Dorsolateral prefrontal cortex (tissue), 120 donors: ENCODE measurements at regions of chr11 and their contacts with region 1.

Region 1: GRCh38 chr11:126607374-126607773 is 251.9 kb downstream of the ST3GAL4 start:
- DNase-seq: peak in 9 of 10 donors; percentile 63 to 83 (median 75)
- H3K4me3 ChIP-seq: peak overlapping the region in 2 of 59 donors; percentile 20 to 32
- H3K27ac ChIP-seq: peak overlapping the region in 19 of 59 donors; percentile 4 to 70 (median 21)
- H3K27me3 ChIP-seq: no peaks in the 10 kb centered on the region
- CTCF ChIP-seq: peak; percentile 26 to 92 (median 83)

Region 2: GRCh38 chr11:126585781-126586491 is 21.4 kb before region 1 on chr11:
- intact Hi-C with region 1: no loop called
- DNase-seq: peak in 3 of 10 donors; percentile 52 to 59 (median 55)
- H3K4me3 ChIP-seq: peak overlapping the region in 27 of 59 donors; percentile 1 to 40 (median 14)
- H3K27ac ChIP-seq: peak overlapping the region in 18 of 59 donors; percentile 1 to 51 (median 26)
- H3K27me3 ChIP-seq: no peaks in the 10 kb centered on the region
- CTCF ChIP-seq: no peak

Region 3: DNA sequence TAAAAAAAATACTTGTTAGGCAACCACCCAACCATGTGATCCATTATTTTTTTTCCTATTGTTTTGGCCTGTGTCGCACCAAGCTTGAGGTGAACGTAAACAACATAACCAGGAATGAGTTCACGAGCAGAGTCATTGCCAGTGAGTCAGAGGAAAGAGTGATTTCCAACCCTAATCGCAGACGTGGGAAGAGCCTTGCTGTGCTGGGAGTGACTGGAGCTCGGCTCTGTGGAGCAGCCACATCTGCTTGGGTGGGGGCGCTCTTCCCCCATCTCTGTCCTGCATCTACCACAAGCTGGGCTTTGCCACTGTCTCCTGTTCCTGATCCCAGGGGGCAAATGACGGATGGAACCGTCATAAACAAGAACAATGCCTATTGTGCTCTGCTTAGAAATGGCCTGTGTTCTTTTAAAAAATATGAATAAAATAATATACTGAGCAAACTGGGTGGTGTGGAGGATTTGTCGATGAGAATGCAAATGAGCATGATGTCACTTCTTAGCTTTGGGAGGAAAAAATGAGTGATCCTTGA is 183.2 kb after region 1 on chr11:
- intact Hi-C with region 1: loop called in 1 of 2 experiments (anchors 5 kb)
- DNase-seq: peak in 9 of 10 donors; percentile 48 to 75 (median 69)
- H3K4me3 ChIP-seq: peak overlapping the region in 1 of 59 donors; percentile 17
- H3K27ac ChIP-seq: peak overlapping the region in 50 of 59 donors; percentile 0 to 77 (median 52)
- H3K27me3 ChIP-seq: no peaks in the 10 kb centered on the region
- CTCF ChIP-seq: peak in 52 of 56 donors; percentile 22 to 78 (median 46)